ENCODE measurements at regions of chr3 and their contacts with region 1.

Region 1: DNA sequence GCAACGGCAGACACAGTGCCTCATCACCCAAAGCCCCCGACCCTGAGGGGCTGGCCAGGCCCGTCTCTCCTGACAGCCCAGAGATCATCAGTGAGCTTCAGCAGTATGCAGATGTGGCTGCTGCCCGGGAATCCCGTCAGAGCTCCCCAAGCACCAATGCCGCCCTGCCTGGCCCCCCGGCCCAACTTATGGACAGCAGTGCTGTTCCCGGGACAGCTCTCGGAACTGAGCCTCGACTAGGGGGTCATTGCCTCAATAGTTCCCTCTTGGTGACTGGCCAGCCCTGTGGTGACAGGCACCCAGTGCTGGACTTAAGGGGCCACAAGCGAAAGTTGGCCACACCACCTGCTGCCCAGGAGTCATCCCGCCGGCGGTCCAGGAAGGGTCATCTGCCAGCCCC is 8.6 kb upstream of the TEX264 start:
- DNase-seq: no peak
- ATAC-seq: no peak
- H3K4me3 ChIP-seq: no peak overlapping the region
- H3K4me3 Mint-ChIP-seq: no peak overlapping the region
- H3K27ac ChIP-seq: no peak overlapping the region
- H3K27ac Mint-ChIP-seq: no peak overlapping the region
- H3K4me1 ChIP-seq: no peaks in the 10 kb centered on the region
- H3K4me1 Mint-ChIP-seq: peaks cover 2 to 5% (median 5%) of the 10 kb centered on the region in 3 donors
- H3K27me3 ChIP-seq: no peaks in the 10 kb centered on the region
- H3K27me3 Mint-ChIP-seq: no peaks in the 10 kb centered on the region

Region 2: GRCh38 chr3:52010431-52010830 is 348.0 kb after region 1 on chr3:
- CTCF ChIA-PET with region 1: interaction called in 1 of 2 experiments, 10 read pairs
- POLR2A ChIA-PET with region 1: no interaction called
- DNase-seq: no peak
- ATAC-seq: no peak
- H3K4me3 ChIP-seq: no peak overlapping the region
- H3K4me3 Mint-ChIP-seq: no peak overlapping the region
- H3K27ac ChIP-seq: no peak overlapping the region
- H3K27ac Mint-ChIP-seq: no peak overlapping the region
- H3K4me1 ChIP-seq: peaks cover 2 to 10% of the 10 kb centered on the region in 2 experiments
- H3K4me1 Mint-ChIP-seq: peaks cover 9% of the 10 kb centered on the region in 3 donors
- H3K27me3 ChIP-seq: peaks cover 0 to 6% of the 10 kb centered on the region in 2 experiments
- H3K27me3 Mint-ChIP-seq: no peaks in the 10 kb centered on the region

Measured in T-cell (primary cell).